K562 (cell line): ENCODE measurements at regions of chr12 and their contacts with region 1.

Region 1: GRCh38 chr12:50715174-50715573 is 48.7 kb upstream of the ATF1 start:
- DNase-seq: no peak
- ATAC-seq: no peak
- H3K4me3 ChIP-seq: no peak overlapping the region
- H3K27ac ChIP-seq: no peak overlapping the region
- H3K4me1 ChIP-seq: no peaks in the 10 kb centered on the region
- H3K27me3 ChIP-seq: no peaks in the 10 kb centered on the region
- CTCF ChIP-seq: no peak
- EP300 ChIP-seq: no peak
- POLR2A ChIP-seq: no peak
- RAD21 ChIP-seq: no peak

Region 2: GRCh38 chr12:50699940-50700339 is 15.2 kb before region 1 on chr12:
- CTCF ChIA-PET with region 1: no interaction called
- POLR2A ChIA-PET with region 1: interaction called, 14 read pairs
- in situ Hi-C with region 1: no loop called
- intact Hi-C with region 1: no loop called
- DNase-seq: no peak
- ATAC-seq: no peak
- H3K4me3 ChIP-seq: no peak overlapping the region
- H3K27ac ChIP-seq: no peak overlapping the region
- H3K4me1 ChIP-seq: no peaks in the 10 kb centered on the region
- H3K27me3 ChIP-seq: no peaks in the 10 kb centered on the region
- CTCF ChIP-seq: no peak
- EP300 ChIP-seq: no peak
- POLR2A ChIP-seq: no peak
- RAD21 ChIP-seq: no peak

Region 3: DNA sequence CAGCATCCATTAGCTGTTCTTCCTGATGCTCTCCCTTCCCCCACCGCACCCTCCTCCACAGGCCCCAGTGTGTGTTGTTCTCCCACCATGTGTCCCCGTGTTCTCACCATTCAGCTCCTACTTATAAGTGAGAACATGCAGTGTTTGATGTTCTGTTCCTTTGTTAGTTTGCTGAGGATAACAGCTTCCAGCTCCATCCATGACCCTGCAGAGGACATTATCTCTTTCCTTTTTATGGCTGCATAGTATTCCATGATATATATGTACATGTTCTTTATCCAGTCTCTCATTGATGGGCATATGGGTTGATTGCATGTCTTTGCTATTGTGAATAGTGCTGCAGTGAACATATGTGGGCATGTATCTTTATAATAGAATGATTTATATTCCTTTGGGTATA is 57.7 kb after region 1 on chr12:
- CTCF ChIA-PET with region 1: no interaction called
- POLR2A ChIA-PET with region 1: no interaction called
- in situ Hi-C with region 1: no loop called
- intact Hi-C with region 1: no loop called
- DNase-seq: no peak
- ATAC-seq: no peak
- H3K4me3 ChIP-seq: no peak overlapping the region
- H3K27ac ChIP-seq: no peak overlapping the region
- H3K4me1 ChIP-seq: peaks cover 6% of the 10 kb centered on the region in 2 experiments
- H3K27me3 ChIP-seq: no peaks in the 10 kb centered on the region
- CTCF ChIP-seq: no peak
- EP300 ChIP-seq: no peak
- POLR2A ChIP-seq: peak; percentile 49
- RAD21 ChIP-seq: no peak